CD14-positive monocyte (primary cell): ENCODE measurements at regions of chr9 and their contacts with region 1.

Region 1: DNA sequence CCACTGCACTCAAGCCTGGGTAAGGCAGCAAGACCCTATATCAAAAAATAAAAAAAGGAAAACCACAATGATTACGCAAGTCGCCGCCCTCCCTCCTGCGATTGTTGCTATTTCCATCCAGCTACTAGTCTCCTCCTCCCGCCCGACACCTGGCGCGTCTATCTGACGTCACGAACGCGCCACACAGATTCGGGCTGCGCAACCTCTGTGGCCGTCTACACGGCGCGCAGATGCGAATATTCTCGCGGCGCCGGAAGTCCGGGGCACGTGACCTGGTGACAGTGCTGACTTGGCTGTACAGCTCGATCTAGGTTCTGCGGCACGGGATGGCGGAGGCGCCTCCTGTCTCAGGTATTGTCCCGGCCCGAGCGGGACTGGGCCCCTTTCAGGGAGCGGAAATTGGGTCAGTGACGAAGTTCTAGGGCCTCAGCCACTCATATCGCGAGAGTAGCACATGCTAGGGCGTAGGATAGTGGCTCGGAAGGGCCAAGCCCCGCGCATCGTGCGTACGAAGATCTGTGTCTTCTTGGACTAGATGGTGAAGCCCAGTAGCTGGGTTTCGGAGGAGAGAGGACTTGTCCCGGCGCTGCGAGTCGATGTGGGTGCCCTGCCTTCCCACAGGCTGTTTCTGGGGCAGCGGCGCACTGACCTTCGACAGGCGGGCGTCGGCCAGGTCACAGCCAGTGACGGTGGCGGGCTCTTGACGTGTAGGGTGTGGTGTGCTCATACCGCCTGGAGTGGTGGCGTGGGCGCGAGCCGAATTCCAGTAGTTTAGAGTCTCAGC is at the start of gene NFX1:
- DNase-seq: peak; percentile 98 to 100 (median 99)
- H3K4me3 ChIP-seq: peak within 1 kb of the TSS; percentile 52 to 84 (median 76)
- H3K4me3 Mint-ChIP-seq: peak within 1 kb of the TSS; percentile 90 to 97
- H3K27ac ChIP-seq: peak within 1 kb of the TSS; percentile 99 to 100
- H3K27ac Mint-ChIP-seq: peak within 1 kb of the TSS; percentile 99 to 100 (median 100)
- H3K4me1 ChIP-seq: peaks cover 25 to 41% of the 10 kb centered on the region in 2 donors
- H3K4me1 Mint-ChIP-seq: peaks cover 46% of the 10 kb centered on the region
- H3K27me3 ChIP-seq: no peaks in the 10 kb centered on the region
- H3K27me3 Mint-ChIP-seq: no peaks in the 10 kb centered on the region
- CTCF ChIP-seq: no peak
- polyA plus RNA-seq, gene NFX1: 4.3 to 26.3 (median 8.1) TPM

Region 2: DNA sequence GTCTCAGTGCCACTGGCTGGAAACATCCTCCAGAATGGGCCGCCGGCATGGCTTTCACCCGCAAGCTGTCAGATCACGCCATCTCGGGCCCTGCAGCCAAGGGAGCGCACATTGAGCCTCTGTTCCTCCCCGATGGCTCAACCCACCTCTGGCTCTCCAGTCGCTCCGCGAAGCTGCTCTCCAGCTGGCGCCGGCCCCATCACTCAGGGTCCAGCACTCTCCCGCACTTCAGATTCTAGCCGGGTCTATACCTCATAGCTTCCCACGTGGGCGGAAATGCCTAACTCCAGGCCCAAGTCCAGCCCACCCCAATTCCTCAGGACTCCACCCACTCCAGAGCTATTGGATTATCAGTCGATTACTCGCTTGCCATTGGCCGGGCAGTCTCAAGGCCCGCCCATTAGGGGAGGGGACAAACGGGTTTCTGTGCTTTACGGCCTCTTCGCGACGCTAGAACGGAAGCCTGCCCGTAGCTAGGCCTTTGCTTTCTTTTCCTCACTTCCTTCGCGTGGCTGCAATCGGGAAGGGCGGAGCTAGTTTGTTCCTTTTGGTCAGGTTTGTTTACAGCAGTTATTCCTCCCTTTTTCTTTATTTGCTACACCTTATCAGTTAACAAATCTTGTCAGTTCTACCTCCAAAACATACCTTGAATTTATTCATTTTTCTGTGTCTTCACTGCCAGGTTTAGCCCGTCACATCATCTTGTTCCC is 183.4 kb after region 1 on chr9 and contains the start of gene NOL6:
- intact Hi-C with region 1: loop called in 1 of 2 experiments (anchors 10 kb)
- DNase-seq: peak; percentile 97 to 99 (median 98)
- H3K4me3 ChIP-seq: peak within 1 kb of the TSS; percentile 82 to 99 (median 97)
- H3K4me3 Mint-ChIP-seq: peak within 1 kb of the TSS; percentile 99 to 100
- H3K27ac ChIP-seq: peak within 1 kb of the TSS; percentile 42 to 77
- H3K27ac Mint-ChIP-seq: peak within 1 kb of the TSS; percentile 89 to 97 (median 93)
- H3K4me1 ChIP-seq: peaks cover 16 to 19% of the 10 kb centered on the region in 2 donors
- H3K4me1 Mint-ChIP-seq: peaks cover 16% of the 10 kb centered on the region
- H3K27me3 ChIP-seq: no peaks in the 10 kb centered on the region
- H3K27me3 Mint-ChIP-seq: no peaks in the 10 kb centered on the region
- CTCF ChIP-seq: no peak
- polyA plus RNA-seq, gene NOL6: 4.6 to 21.9 (median 10.1) TPM